Spleen (tissue), 13 donors: ENCODE measurements at regions of chr10 and their contacts with region 1.

Region 1: GRCh38 chr10:30529373-30529998 is 95.5 kb downstream of the MAP3K8 start:
- DNase-seq: peak; percentile 96
- H3K4me3 ChIP-seq: peak overlapping the region in 6 of 8 donors; percentile 13 to 61 (median 24)
- H3K27ac ChIP-seq: peak overlapping the region; percentile 69 to 96 (median 91)
- H3K4me1 ChIP-seq: peaks cover 27 to 98% (median 78%) of the 10 kb centered on the region in 6 donors
- H3K27me3 ChIP-seq: no peaks in the 10 kb centered on the region
- CTCF ChIP-seq: peak in 3 of 11 experiments; percentile 12 to 43 (median 39)
- POLR2A ChIP-seq: peak in 1 of 3 donors; percentile 50

Region 2: GRCh38 chr10:30294479-30295240 is 234.8 kb before region 1 on chr10:
- intact Hi-C with region 1: no loop called
- DNase-seq: no peak
- H3K4me3 ChIP-seq: no peak overlapping the region
- H3K27ac ChIP-seq: no peak overlapping the region
- H3K4me1 ChIP-seq: no peaks in the 10 kb centered on the region
- H3K27me3 ChIP-seq: no peaks in the 10 kb centered on the region
- CTCF ChIP-seq: no peak
- POLR2A ChIP-seq: no peak

Region 3: DNA sequence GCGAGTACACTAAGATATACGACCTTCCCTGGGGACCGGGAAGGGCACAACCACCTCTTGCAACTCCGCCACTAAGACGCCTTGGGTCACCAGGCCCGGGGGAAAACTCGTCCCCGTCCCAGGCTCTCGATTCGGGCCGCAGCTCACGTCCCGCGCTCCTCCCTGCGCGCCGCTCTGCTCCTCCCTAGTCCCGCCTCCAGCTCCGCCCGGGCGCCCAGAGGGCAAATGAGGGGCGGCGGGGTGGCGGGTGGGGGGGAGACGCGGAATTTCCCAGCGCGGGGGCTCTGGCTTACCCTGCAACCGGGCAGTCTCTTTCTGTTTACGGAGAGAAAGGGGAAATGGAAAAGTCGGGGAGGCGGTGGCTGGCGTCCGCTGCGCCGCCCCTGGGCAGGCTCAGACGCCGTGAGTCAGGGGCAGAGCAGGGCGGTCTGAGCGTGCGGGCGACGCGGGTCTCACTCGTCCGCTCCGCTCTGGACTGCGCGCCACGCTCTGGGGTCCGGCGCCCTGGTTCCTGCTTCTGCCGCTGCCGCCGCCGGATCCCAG is 95.7 kb before region 1 on chr10 and contains the start of gene MAP3K8:
- intact Hi-C with region 1: loop called (anchors 10 kb)
- DNase-seq: peak; percentile 98
- H3K4me3 ChIP-seq: peak within 1 kb of the TSS; percentile 78 to 100 (median 98)
- H3K27ac ChIP-seq: peak within 1 kb of the TSS; percentile 94 to 100 (median 100)
- H3K4me1 ChIP-seq: peaks cover 27 to 81% (median 63%) of the 10 kb centered on the region in 6 donors
- H3K27me3 ChIP-seq: no peaks in the 10 kb centered on the region
- CTCF ChIP-seq: peak in 2 of 11 experiments; percentile 14 to 17
- POLR2A ChIP-seq: peak; percentile 24 to 80 (median 36)
- total RNA-seq, gene MAP3K8: 36.2 to 84.3 (median 61.8) TPM